RWPE1 (cell line): ENCODE measurements at regions of chr10 and their contacts with region 1.

Region 1: DNA sequence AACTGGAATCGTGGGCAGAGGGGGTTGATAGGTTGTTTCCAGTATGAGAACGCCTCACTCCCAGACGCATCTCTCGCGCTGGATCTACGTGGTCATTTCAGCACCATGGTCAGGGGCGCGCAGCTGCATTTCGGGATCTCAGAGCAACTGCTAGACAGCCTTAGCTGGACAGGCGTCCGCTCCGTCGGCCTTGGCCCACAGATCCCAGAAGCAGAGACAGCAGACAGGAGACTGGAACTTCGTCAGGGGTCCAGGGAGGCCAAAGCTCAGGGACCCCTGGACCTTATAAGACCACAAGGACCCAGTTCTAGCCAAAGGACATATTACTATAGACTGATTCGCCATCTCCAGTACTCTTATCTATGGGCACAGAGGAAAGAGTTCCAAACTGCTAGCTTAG is 5.3 kb downstream of the NEUROG3 start:
- DNase-seq: peak; percentile 64
- H3K27ac ChIP-seq: no peak overlapping the region
- CTCF ChIP-seq: no peak

Region 2: GRCh38 chr10:69527961-69528360 is 40.0 kb before region 1 on chr10:
- CTCF ChIA-PET with region 1: no interaction called
- POLR2A ChIA-PET with region 1: interaction called, 15 read pairs
- DNase-seq: no peak
- H3K27ac ChIP-seq: no peak overlapping the region
- CTCF ChIP-seq: no peak